ENCODE measurements at regions of chr12 and their contacts with region 1.

Region 1: GRCh38 chr12:78418919-78419318 is 445.7 kb upstream of the SYT1 start:
- DNase-seq: no peak
- ATAC-seq: no peak
- H3K4me3 ChIP-seq: no peak overlapping the region
- H3K27ac ChIP-seq: no peak overlapping the region
- H3K4me1 ChIP-seq: no peaks in the 10 kb centered on the region
- H3K27me3 ChIP-seq: no peaks in the 10 kb centered on the region
- CTCF ChIP-seq: no peak
- EP300 ChIP-seq: no peak
- POLR2A ChIP-seq: no peak
- RAD21 ChIP-seq: no peak

Region 2: DNA sequence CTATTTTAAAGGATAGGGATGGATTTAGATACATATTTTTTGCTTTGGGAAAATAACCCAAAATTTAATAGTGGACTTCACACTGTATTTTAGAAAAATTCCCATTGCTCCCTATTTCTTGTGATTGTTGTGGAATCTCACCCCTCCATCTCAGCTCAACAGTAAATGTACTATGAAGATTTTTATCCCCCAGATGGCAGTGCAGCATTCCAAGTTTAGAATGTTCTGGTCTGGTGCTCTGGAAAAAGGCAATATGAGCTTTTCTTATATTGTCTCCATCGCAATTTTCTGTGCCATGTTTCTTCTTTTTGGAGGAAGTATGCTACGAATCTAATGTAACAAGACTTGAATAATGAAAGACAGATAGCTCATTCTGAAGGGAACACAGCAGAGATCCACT is 26.0 kb before region 1 on chr12:
- CTCF ChIA-PET with region 1: no interaction called
- POLR2A ChIA-PET with region 1: no interaction called
- in situ Hi-C with region 1: no loop called
- intact Hi-C with region 1: loop called (anchors 1 kb)
- DNase-seq: no peak
- ATAC-seq: no peak
- H3K4me3 ChIP-seq: no peak overlapping the region
- H3K27ac ChIP-seq: no peak overlapping the region
- H3K4me1 ChIP-seq: no peaks in the 10 kb centered on the region
- H3K27me3 ChIP-seq: no peaks in the 10 kb centered on the region; a peak in 1 of 5 replicates
- CTCF ChIP-seq: no peak
- EP300 ChIP-seq: no peak
- POLR2A ChIP-seq: no peak
- RAD21 ChIP-seq: no peak